PC-3 (cell line): ENCODE measurements at regions of chr18 and their contacts with region 1.

Region 1: GRCh38 chr18:2223849-2224248 is 347.5 kb downstream of the METTL4 start:
- DNase-seq: peak; percentile 70
- ATAC-seq: peak; percentile 73
- H3K4me3 ChIP-seq: no peak overlapping the region
- H3K27ac ChIP-seq: no peak overlapping the region
- H3K4me1 ChIP-seq: peaks cover 11% of the 10 kb centered on the region
- H3K27me3 ChIP-seq: no peaks in the 10 kb centered on the region
- CTCF ChIP-seq: peak; percentile 83

Region 2: GRCh38 chr18:1585879-1586488 is 637.9 kb before region 1 on chr18:
- CTCF ChIA-PET with region 1: no interaction called
- POLR2A ChIA-PET with region 1: no interaction called
- intact Hi-C with region 1: loop called (anchors 1 kb)
- DNase-seq: peak; percentile 69
- ATAC-seq: peak; percentile 78
- H3K4me3 ChIP-seq: no peak overlapping the region
- H3K27ac ChIP-seq: no peak overlapping the region
- H3K4me1 ChIP-seq: no peaks in the 10 kb centered on the region
- H3K27me3 ChIP-seq: peaks cover 73% of the 10 kb centered on the region
- CTCF ChIP-seq: peak; percentile 73

Region 3: DNA sequence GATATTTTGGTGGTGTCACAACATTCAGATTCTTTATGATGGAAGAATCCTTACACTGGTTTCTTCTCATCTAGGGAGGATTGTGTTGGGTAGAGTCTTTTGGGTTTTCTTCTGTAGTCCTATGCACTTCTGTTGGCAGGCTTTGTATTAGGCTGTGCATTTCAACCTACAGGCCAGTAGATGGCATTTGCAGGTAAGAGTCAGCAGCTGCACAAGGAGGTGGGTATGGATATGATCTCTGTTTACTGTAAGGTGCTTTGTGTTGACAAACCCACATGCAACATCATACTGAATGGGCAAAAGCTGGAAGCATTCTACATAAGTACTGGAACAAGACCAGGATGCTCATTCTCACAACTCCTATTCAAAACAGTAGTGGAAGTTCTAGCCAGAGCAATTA is 309.4 kb before region 1 on chr18:
- CTCF ChIA-PET with region 1: no interaction called
- POLR2A ChIA-PET with region 1: no interaction called
- intact Hi-C with region 1: loop called (anchors 1 kb)
- DNase-seq: peak; percentile 56
- ATAC-seq: peak; percentile 81
- H3K4me3 ChIP-seq: no peak overlapping the region
- H3K27ac ChIP-seq: no peak overlapping the region
- H3K4me1 ChIP-seq: no peaks in the 10 kb centered on the region
- H3K27me3 ChIP-seq: no peaks in the 10 kb centered on the region
- CTCF ChIP-seq: peak; percentile 76

Region 4: DNA sequence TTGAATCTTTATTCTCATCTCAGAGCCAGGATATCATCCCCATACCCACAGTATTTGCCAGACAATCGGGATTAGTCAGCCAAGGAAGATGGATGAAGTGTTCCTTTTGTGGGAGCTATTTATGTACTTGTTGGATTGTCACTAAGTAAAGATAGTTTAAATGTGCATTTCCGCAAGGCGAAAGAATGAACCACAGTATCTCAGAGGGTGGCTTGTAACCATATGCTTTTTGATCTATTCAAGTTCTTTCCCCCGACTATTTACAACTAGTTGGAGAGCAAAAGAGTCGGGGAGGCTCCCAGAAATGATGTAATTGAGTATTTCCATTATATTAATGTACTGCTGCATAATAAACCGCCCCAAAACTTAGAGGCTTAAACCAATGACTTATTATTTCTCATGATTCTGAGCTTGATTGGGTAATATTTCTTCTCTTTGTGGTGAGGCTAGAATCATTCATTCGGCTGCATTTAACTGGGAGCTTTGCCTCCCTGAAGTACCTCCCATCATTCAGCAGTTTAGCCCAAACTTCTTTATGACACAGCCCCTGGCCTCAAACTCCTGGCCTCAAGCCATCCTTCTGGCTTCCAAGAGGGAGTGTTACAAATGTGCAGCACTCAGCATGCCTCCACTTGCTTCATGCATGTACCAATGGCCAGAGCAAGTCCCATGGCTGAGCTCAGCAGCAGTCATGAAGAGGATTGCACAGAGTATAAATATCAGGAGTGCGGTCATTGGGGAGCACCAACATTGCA is 76.2 kb before region 1 on chr18:
- CTCF ChIA-PET with region 1: no interaction called
- POLR2A ChIA-PET with region 1: no interaction called
- intact Hi-C with region 1: loop called (anchors 1 kb)
- DNase-seq: peak; percentile 85
- ATAC-seq: peak; percentile 76
- H3K4me3 ChIP-seq: peak overlapping the region; percentile 37; the same call in 1 of the 2 replicates
- H3K27ac ChIP-seq: peak overlapping the region; percentile 90
- H3K4me1 ChIP-seq: peaks cover 35% of the 10 kb centered on the region
- H3K27me3 ChIP-seq: no peaks in the 10 kb centered on the region
- CTCF ChIP-seq: no peak

Region 5: GRCh38 chr18:2536493-2536892 is 312.6 kb after region 1 on chr18:
- CTCF ChIA-PET with region 1: no interaction called
- POLR2A ChIA-PET with region 1: no interaction called
- intact Hi-C with region 1: loop called (anchors 5 kb)
- DNase-seq: peak; percentile 18
- ATAC-seq: peak; percentile 24; the same call in 1 of the 2 replicates
- H3K4me3 ChIP-seq: no peak overlapping the region
- H3K27ac ChIP-seq: no peak overlapping the region
- H3K4me1 ChIP-seq: peaks cover 16% of the 10 kb centered on the region; the same call in 1 of the 2 replicates
- H3K27me3 ChIP-seq: no peaks in the 10 kb centered on the region
- CTCF ChIP-seq: no peak